H1 (cell line): ENCODE measurements at regions of chr12 and their contacts with region 1.

Region 1: DNA sequence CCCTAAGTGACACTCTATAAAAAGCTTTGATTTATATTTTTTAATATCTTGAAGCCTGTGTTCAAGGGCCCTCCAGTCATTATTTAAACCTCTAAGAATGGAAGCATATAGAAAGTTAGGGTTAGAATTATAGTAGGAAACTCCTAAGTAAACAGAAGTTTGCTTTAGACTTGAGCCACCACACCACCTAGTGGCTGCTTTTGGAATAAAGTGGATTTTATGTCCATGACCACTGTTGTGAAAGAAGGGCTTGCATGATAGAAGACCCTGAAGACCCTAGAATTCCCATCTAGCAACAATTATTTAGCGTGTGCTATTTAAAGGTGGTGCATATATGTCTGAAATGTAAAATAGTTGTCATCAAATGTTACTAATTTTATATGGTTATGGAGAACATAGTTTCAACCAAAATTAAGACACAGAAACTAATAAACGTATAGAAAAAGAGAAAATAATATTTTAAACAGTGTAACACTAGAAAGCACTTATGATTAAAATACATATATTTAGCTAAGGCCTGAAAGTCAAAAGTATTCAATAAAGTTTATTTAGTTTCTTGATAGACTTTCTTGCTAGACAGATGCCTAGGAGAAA is 21.3 kb downstream of the LRRIQ1 start:
- DNase-seq: peak in 1 of 2 experiments; percentile 60
- H3K4me3 ChIP-seq: no peak overlapping the region
- H3K27ac ChIP-seq: no peak overlapping the region
- H3K4me1 ChIP-seq: no peaks in the 10 kb centered on the region
- H3K27me3 ChIP-seq: no peaks in the 10 kb centered on the region
- CTCF ChIP-seq: peak in 2 of 3 experiments; percentile 54 to 58; a peak in 3 of 4 replicates
- EP300 ChIP-seq: no peak
- POLR2A ChIP-seq: no peak
- RAD21 ChIP-seq: peak; percentile 77

Region 2: GRCh38 chr12:84974155-84974815 is 83.2 kb before region 1 on chr12:
- CTCF ChIA-PET with region 1: interaction called, 10 read pairs
- POLR2A ChIA-PET with region 1: no interaction called
- DNase-seq: no peak
- H3K4me3 ChIP-seq: no peak overlapping the region
- H3K27ac ChIP-seq: no peak overlapping the region
- H3K4me1 ChIP-seq: no peaks in the 10 kb centered on the region
- H3K27me3 ChIP-seq: no peaks in the 10 kb centered on the region
- CTCF ChIP-seq: no peak
- EP300 ChIP-seq: no peak
- POLR2A ChIP-seq: no peak
- RAD21 ChIP-seq: no peak

Region 3: DNA sequence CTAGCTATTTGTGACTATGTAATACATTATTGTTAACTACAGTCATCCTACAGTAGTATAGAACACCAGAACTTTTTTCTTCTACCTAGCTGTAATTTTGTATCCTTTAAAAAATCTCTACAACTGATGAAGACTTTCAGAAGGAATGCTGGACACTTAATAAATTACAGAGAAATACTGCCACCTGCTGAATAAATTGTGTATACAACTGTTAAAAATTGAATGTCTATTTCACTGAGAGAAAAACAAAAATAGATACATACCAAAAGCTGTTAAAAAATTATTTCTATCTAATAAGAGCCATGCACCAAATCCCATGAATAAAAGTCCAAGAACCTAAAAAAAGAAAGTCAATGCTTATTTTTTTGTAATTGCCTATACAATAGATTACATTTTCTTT is 28.0 kb before region 1 on chr12:
- CTCF ChIA-PET with region 1: interaction called, 24 read pairs
- POLR2A ChIA-PET with region 1: no interaction called
- DNase-seq: no peak
- H3K4me3 ChIP-seq: no peak overlapping the region
- H3K27ac ChIP-seq: no peak overlapping the region
- H3K4me1 ChIP-seq: no peaks in the 10 kb centered on the region
- H3K27me3 ChIP-seq: peaks cover 0 to 2% (median 0%) of the 10 kb centered on the region in 4 experiments; a peak in 1 of 7 replicates
- CTCF ChIP-seq: peak in 1 of 3 experiments; percentile 24; a peak in 1 of 4 replicates
- EP300 ChIP-seq: no peak
- POLR2A ChIP-seq: no peak
- RAD21 ChIP-seq: peak in 1 of 2 experiments; percentile 62; a peak in 3 of 4 replicates

Region 4: GRCh38 chr12:85043821-85044220 is 13.6 kb before region 1 on chr12:
- CTCF ChIA-PET with region 1: interaction called, 24 read pairs
- POLR2A ChIA-PET with region 1: no interaction called
- DNase-seq: no peak
- H3K4me3 ChIP-seq: no peak overlapping the region
- H3K27ac ChIP-seq: no peak overlapping the region
- H3K4me1 ChIP-seq: no peaks in the 10 kb centered on the region
- H3K27me3 ChIP-seq: peaks cover 0 to 1% (median 0%) of the 10 kb centered on the region in 4 experiments; a peak in 1 of 7 replicates
- CTCF ChIP-seq: no peak
- EP300 ChIP-seq: no peak
- POLR2A ChIP-seq: no peak
- RAD21 ChIP-seq: no peak